ENCODE measurements at regions of chr6 and their contacts with region 1.

Region 1: DNA sequence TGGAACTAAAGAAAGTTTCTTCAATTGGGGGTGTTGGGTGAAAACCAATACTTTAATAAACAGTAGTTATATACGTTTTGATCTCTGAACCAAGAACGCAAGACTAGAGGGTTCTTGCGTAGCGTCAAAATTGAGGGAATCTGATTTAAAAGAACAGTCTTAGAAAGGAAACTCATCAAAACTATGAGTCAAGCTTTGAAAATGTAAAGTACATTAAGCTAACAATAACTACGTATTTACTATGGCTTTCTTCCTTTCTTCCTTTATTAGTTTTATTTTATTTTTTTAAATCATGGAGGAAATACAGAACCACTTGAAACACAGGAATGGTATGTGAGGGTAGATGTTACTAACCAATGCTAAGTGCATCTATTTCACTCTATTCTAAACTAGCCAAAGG is 287.0 kb upstream of the RSPO3 start:
- DNase-seq: peak; percentile 72
- H3K4me3 ChIP-seq: no peak overlapping the region
- H3K27ac ChIP-seq: peak overlapping the region; percentile 88
- H3K4me1 ChIP-seq: peaks cover 20% of the 10 kb centered on the region
- H3K27me3 ChIP-seq: no peaks in the 10 kb centered on the region
- CTCF ChIP-seq: no peak
- POLR2A ChIP-seq: no peak

Region 2: DNA sequence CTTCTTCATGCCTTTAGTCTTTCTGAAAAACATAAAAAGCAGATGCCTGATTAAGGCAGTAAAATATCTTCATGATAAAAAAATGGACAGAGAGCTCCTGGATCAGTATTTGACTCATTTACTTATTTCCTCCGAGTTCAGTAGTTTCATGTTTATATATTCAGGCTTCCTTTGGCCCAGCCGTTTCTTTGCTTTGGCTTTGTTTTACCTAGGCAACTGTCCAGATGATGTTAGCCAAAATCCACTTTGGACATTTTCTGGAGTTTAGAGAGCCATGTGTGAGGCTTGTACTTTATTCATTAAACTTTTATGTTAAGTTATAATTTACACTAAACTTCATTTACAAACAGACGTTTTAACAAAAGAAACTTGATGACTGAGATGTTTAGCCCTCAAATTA is 20.1 kb before region 1 on chr6:
- CTCF ChIA-PET with region 1: interaction called, 17 read pairs
- POLR2A ChIA-PET with region 1: no interaction called
- dilution Hi-C with region 1: no loop called
- intact Hi-C with region 1: no loop called
- DNase-seq: peak; percentile 85
- H3K4me3 ChIP-seq: no peak overlapping the region
- H3K27ac ChIP-seq: peak overlapping the region; percentile 79
- H3K4me1 ChIP-seq: peaks cover 27% of the 10 kb centered on the region
- H3K27me3 ChIP-seq: no peaks in the 10 kb centered on the region
- CTCF ChIP-seq: no peak
- POLR2A ChIP-seq: no peak

Region 3: DNA sequence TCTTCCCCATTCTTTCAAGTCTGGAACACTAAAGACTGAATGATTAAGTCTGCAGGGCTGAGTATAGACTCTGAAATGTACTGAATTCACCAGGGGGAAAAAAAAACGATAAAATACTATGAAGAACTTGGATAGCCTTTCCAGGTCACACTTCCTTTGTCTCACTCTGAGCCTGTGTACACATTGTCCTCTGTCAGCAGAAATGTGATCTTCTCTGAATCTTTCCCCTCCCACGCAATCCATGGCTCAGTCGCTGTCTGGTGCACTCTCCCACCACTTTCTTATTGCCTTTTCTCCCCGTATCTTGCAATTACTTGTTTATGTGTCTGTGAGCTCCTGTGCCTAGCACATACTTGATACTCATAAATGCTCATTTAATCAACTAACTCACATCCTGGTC is 74.5 kb after region 1 on chr6:
- CTCF ChIA-PET with region 1: no interaction called
- POLR2A ChIA-PET with region 1: no interaction called
- dilution Hi-C with region 1: no loop called
- intact Hi-C with region 1: no loop called
- DNase-seq: no peak
- H3K4me3 ChIP-seq: no peak overlapping the region
- H3K27ac ChIP-seq: no peak overlapping the region
- H3K4me1 ChIP-seq: no peaks in the 10 kb centered on the region
- H3K27me3 ChIP-seq: no peaks in the 10 kb centered on the region
- CTCF ChIP-seq: no peak
- POLR2A ChIP-seq: no peak

Region 4: DNA sequence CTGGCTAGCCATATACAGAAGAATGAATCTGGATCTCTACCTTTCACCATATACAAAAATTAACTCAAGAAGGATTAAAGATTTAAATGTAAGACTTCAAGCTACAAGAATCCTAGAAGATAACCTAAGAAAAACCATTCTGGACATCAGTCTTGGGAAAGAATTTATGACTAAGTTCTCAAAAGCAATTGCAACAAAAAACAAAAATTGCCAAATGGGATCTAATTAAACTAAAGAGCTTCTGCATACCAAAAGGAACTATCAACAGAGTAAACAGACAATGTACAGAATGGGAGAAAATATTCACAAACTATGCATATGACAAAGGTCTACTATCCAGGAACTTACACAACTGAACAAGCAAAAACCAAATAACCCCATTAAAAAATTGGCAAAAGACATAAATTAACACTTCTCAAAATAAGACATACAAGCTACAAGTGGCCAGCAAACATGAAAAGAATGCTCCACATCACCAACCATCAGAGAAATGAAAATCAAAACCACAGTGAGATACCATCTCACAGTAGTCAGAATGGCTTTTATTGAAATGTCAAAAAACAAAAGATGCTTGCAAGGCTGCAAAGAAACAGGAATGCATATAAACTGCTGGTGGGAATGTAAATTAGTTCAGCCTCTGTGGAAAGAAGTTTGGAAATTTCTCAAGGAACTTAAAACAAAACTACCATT is 220.3 kb after region 1 on chr6:
- CTCF ChIA-PET with region 1: no interaction called
- POLR2A ChIA-PET with region 1: no interaction called
- dilution Hi-C with region 1: no loop called
- intact Hi-C with region 1: loop called (anchors 2 kb)
- DNase-seq: no peak
- H3K4me3 ChIP-seq: no peak overlapping the region
- H3K27ac ChIP-seq: no peak overlapping the region
- H3K4me1 ChIP-seq: peaks cover 24% of the 10 kb centered on the region
- H3K27me3 ChIP-seq: no peaks in the 10 kb centered on the region
- CTCF ChIP-seq: no peak
- POLR2A ChIP-seq: no peak